Activated T-helper 2 cell treated with anti-CD3 and anti-CD28 coated beads, Interferon-gamma antibody, Interleukin-2, Interleukin-4, amounts not matched to agents 10 μg/mL and 5 μg/mL and 100 μg/mL, durations not matched to agents 14 hours and 24 hours and 36 hours (primary cell): ENCODE measurements at regions of chr2 and their contacts with region 1.

Region 1: GRCh38 chr2:187581125-187581896 is 27.1 kb upstream of the TFPI start:
- DNase-seq: no peak
- H3K4me3 Mint-ChIP-seq: no peak overlapping the region
- H3K27ac Mint-ChIP-seq: no peak overlapping the region
- H3K4me1 Mint-ChIP-seq: peaks cover 12% of the 10 kb centered on the region
- H3K27me3 Mint-ChIP-seq: no peaks in the 10 kb centered on the region

Region 2: GRCh38 chr2:187475499-187476248 is 105.6 kb before region 1 on chr2:
- intact Hi-C with region 1: loop called (anchors 1 kb)
- DNase-seq: no peak
- H3K4me3 Mint-ChIP-seq: no peak overlapping the region
- H3K27ac Mint-ChIP-seq: no peak overlapping the region
- H3K4me1 Mint-ChIP-seq: peaks cover 4% of the 10 kb centered on the region
- H3K27me3 Mint-ChIP-seq: no peaks in the 10 kb centered on the region

Region 3: DNA sequence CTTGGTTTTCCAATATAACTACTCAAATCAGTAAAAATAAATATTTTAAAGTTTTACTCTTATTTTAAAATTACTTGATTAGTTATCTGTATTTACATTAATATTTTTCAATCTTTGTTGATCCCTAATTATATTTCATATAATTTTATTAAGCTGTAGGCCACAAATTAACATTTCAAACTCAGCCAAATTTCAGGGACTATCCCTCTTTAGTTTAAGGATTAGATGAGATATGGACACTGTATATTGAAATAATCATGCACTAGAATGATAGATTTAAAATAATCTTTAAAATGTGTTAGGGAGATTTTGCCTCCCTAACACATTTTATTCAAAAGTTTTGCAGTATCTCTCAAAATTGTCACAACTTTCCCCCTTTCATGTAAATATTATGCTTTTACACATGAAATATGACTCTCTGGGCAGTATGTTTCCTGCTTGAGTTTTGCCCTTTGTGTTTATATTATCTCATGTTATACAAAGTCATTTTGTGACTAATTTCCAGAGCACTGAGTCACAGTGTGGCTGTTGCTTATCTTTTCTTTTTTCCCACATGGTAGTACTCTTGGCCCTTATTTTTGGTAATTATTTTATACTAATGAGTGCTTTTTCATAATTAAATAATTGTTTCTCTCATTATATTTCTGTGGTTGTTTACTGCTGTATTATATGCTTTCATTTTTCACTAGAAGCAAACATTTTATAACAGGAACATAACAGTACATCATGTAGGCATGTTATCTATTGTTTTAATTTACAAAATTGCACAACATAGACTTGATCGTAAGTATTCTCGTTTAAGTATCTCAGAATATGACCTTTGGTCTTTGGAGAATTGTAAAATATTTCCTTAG is 28.3 kb before region 1 on chr2:
- intact Hi-C with region 1: loop called (anchors 1 kb)
- DNase-seq: no peak
- H3K4me3 Mint-ChIP-seq: no peak overlapping the region
- H3K27ac Mint-ChIP-seq: no peak overlapping the region
- H3K4me1 Mint-ChIP-seq: peaks cover 12% of the 10 kb centered on the region
- H3K27me3 Mint-ChIP-seq: peaks cover 20% of the 10 kb centered on the region

Region 4: GRCh38 chr2:187842978-187843847 is 261.9 kb after region 1 on chr2:
- intact Hi-C with region 1: loop called (anchors 1 kb)
- DNase-seq: no peak
- H3K4me3 Mint-ChIP-seq: no peak overlapping the region
- H3K27ac Mint-ChIP-seq: no peak overlapping the region
- H3K4me1 Mint-ChIP-seq: no peaks in the 10 kb centered on the region
- H3K27me3 Mint-ChIP-seq: no peaks in the 10 kb centered on the region